AG04450 (cell line): ENCODE measurements at regions of chr5 and their contacts with region 1.

Region 1: GRCh38 chr5:134586866-134587524 is 45.6 kb downstream of the SAR1B start:
- DNase-seq: peak; percentile 38
- H3K4me3 ChIP-seq: no peak overlapping the region
- H3K27ac ChIP-seq: no peak overlapping the region
- H3K27me3 ChIP-seq: no peaks in the 10 kb centered on the region
- CTCF ChIP-seq: peak; percentile 85

Region 2: GRCh38 chr5:134304311-134304710 is 282.7 kb before region 1 on chr5:
- CTCF ChIA-PET with region 1: interaction called, 106 read pairs
- POLR2A ChIA-PET with region 1: no interaction called
- DNase-seq: no peak
- H3K4me3 ChIP-seq: no peak overlapping the region
- H3K27ac ChIP-seq: no peak overlapping the region
- H3K27me3 ChIP-seq: no peaks in the 10 kb centered on the region
- CTCF ChIP-seq: no peak

Region 3: DNA sequence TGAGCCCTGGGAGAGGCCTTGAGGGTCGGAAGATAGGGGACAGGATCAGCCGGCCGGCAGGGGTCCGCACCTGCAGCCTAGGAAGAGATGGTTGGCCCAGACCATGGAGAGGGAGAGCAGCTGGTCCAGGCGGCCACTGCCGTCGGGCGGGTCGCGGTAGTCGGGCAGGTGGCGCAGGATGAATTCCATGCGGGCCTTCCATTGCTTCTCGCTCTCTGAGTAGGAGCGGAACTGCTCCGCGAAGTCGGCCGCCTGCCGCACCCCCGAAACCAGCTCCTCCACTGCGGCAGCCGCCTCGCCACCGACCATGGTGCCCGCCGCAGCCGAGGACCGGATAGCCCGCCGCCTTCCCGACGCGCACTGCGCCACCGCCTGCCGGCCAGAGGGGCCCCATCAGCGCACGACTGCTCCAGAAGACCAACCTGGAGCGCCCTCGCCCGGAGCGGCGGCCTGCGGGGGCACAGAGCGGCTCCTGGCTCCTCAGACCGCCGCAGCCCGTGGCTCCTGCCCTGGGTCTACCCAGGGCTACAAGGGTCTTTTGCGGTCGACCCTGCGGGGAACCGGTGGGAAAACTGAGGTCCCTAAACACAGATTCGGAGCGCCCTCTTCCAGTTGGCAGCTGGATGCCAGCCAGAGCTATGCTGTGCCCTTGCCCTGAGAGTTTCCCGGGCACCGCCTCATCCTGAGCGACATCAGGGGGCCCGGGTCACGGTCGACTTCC is 175.3 kb before region 1 on chr5 and contains the start of gene CDKN2AIPNL:
- CTCF ChIA-PET with region 1: interaction called, 33 read pairs
- POLR2A ChIA-PET with region 1: no interaction called
- DNase-seq: peak; percentile 61
- H3K4me3 ChIP-seq: peak within 1 kb of the TSS; percentile 79
- H3K27ac ChIP-seq: peak within 1 kb of the TSS; percentile 39
- H3K27me3 ChIP-seq: no peaks in the 10 kb centered on the region
- CTCF ChIP-seq: peak; percentile 67
- polyA plus RNA-seq, gene CDKN2AIPNL: 16.7 and 20.8 TPM in 2 replicates

Region 4: GRCh38 chr5:134527146-134527960 is 59.6 kb before region 1 on chr5:
- CTCF ChIA-PET with region 1: interaction called, 11 read pairs
- POLR2A ChIA-PET with region 1: no interaction called
- DNase-seq: peak; percentile 69
- H3K4me3 ChIP-seq: peak overlapping the region; percentile 73
- H3K27ac ChIP-seq: peak overlapping the region; percentile 70
- H3K27me3 ChIP-seq: no peaks in the 10 kb centered on the region
- CTCF ChIP-seq: peak; percentile 81

Region 5: DNA sequence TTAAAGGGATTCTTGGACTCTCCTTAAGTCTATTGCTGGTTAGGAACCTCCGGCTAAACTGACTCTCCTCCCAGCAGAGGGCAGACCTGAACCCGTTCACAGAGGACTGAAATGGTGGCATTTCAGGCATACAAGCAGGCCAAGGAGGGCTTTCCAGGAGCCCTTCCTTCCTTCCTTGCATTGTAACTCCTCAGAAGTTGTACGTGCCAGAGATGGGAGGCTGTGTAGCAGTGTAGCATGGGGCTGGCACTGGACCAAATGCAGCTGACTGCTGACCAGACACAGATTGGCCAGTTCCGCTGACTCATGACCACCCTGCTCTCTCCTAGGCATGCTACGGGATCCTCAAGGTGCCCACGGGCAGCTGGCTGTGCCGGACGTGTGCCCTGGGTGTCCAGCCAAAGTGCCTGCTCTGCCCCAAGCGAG is 25.1 kb before region 1 on chr5:
- CTCF ChIA-PET with region 1: interaction called, 11 read pairs
- POLR2A ChIA-PET with region 1: no interaction called
- DNase-seq: no peak
- H3K4me3 ChIP-seq: no peak overlapping the region
- H3K27ac ChIP-seq: no peak overlapping the region
- H3K27me3 ChIP-seq: no peaks in the 10 kb centered on the region
- CTCF ChIP-seq: peak; percentile 59

Region 6: DNA sequence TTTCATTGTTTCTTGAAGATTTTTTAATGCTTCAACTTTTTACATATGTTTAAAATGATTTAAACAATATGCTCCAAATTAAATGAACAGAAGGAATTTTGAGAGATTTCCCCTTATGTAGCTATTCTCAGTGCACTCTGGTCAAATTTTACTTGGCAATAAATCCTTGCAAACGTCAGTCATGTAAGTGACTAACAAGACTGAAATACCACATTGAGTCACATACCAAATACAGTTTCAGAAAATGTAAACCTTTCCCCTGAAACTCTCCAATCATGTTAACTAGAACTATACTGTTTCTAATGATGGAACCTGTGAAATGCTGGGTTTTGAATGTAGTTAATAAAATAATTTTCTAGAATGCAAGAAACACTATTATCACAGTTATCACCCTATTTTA is 16.1 kb after region 1 on chr5:
- CTCF ChIA-PET with region 1: interaction called, 49 read pairs
- POLR2A ChIA-PET with region 1: interaction called, 6 read pairs
- DNase-seq: peak; percentile 36
- H3K4me3 ChIP-seq: no peak overlapping the region
- H3K27ac ChIP-seq: no peak overlapping the region
- H3K27me3 ChIP-seq: no peaks in the 10 kb centered on the region
- CTCF ChIP-seq: no peak

Region 7: GRCh38 chr5:134609232-134609851 is 22.3 kb after region 1 on chr5:
- CTCF ChIA-PET with region 1: interaction called, 13 read pairs
- POLR2A ChIA-PET with region 1: no interaction called
- DNase-seq: no peak
- H3K4me3 ChIP-seq: no peak overlapping the region
- H3K27ac ChIP-seq: no peak overlapping the region
- H3K27me3 ChIP-seq: no peaks in the 10 kb centered on the region
- CTCF ChIP-seq: no peak